Activated T-helper 1 cell treated with anti-CD3 and anti-CD28 coated beads, Interleukin-12 subunit alpha, Interleukin-12 subunit beta, Interleukin-2, Interleukin-4 antibody, amounts not matched to agents 30 ng/mL and 10 ng/mL and 1 ng/mL, durations not matched to agents 14 hours and 24 hours and 36 hours (primary cell): ENCODE measurements at regions of chr16 and their contacts with region 1.

Region 1: GRCh38 chr16:14300705-14301168 is 229.6 kb downstream of the MRTFB start:
- DNase-seq: no peak
- H3K4me3 Mint-ChIP-seq: peak overlapping the region; percentile 71
- H3K27ac Mint-ChIP-seq: peak overlapping the region; percentile 49
- H3K4me1 Mint-ChIP-seq: peaks cover 10% of the 10 kb centered on the region
- H3K27me3 Mint-ChIP-seq: peaks cover 38% of the 10 kb centered on the region

Region 2: DNA sequence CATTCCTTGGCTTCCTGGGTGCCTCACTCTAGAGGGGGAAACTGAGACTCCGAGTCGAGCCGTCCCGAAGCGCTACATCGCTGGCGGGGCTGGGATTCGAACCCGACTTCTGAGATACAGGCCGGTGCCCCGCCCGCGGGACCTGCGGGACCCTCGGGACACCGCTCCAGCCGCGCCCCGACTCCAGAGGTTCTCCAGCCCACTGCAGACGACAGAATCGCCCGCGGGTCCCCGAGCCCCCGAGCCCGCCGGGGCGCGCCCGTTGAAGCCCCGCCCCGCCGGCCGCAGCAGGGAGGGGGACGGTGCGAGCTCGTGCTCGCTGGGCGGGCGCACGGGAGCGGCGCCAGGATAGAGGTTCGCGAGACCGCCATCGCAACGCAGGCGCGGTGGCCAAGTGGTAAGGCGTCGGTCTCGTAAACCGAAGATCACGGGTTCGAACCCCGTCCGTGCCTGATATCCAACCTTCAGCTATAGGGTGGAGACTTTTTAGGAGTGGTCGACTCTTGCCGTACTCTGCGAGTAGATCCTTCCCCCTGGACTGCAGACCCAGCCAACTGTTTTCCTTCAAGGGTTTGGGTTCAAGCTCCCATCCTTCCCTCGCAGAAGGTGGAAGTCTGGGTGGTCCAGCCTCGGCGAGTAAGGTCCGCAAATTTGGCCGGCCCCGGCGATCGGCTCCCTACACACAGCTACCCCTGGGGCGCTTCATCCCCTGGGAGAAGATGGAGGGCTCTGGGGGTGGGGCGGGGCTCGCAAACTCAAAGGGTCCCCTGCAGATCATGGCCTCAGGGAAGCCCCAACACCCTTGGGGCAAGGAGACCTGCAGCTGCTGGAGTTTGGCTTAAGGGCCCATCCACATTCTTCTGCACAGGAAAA is 15.0 kb before region 1 on chr16:
- intact Hi-C with region 1: loop called (anchors 1 kb)
- DNase-seq: peak; percentile 91
- H3K4me3 Mint-ChIP-seq: peak overlapping the region; percentile 89
- H3K27ac Mint-ChIP-seq: peak overlapping the region; percentile 77
- H3K4me1 Mint-ChIP-seq: peaks cover 20% of the 10 kb centered on the region
- H3K27me3 Mint-ChIP-seq: peaks cover 6% of the 10 kb centered on the region

Region 3: GRCh38 chr16:14354551-14355351 is 54.0 kb after region 1 on chr16:
- intact Hi-C with region 1: loop called (anchors 1 kb)
- DNase-seq: peak; percentile 24
- H3K4me3 Mint-ChIP-seq: peak overlapping the region; percentile 8
- H3K27ac Mint-ChIP-seq: no peak overlapping the region
- H3K4me1 Mint-ChIP-seq: peaks cover 10% of the 10 kb centered on the region
- H3K27me3 Mint-ChIP-seq: peaks cover 21% of the 10 kb centered on the region

Region 4: GRCh38 chr16:14529010-14529669 is 228.4 kb after region 1 on chr16:
- intact Hi-C with region 1: loop called (anchors 2 kb)
- DNase-seq: peak; percentile 24
- H3K4me3 Mint-ChIP-seq: no peak overlapping the region
- H3K27ac Mint-ChIP-seq: no peak overlapping the region
- H3K4me1 Mint-ChIP-seq: peaks cover 5% of the 10 kb centered on the region
- H3K27me3 Mint-ChIP-seq: no peaks in the 10 kb centered on the region

Region 5: GRCh38 chr16:14600164-14600563 is 299.4 kb after region 1 on chr16:
- intact Hi-C with region 1: loop called (anchors 1 kb)
- DNase-seq: no peak
- H3K4me3 Mint-ChIP-seq: no peak overlapping the region
- H3K27ac Mint-ChIP-seq: no peak overlapping the region
- H3K4me1 Mint-ChIP-seq: peaks cover 6% of the 10 kb centered on the region
- H3K27me3 Mint-ChIP-seq: no peaks in the 10 kb centered on the region

Region 6: DNA sequence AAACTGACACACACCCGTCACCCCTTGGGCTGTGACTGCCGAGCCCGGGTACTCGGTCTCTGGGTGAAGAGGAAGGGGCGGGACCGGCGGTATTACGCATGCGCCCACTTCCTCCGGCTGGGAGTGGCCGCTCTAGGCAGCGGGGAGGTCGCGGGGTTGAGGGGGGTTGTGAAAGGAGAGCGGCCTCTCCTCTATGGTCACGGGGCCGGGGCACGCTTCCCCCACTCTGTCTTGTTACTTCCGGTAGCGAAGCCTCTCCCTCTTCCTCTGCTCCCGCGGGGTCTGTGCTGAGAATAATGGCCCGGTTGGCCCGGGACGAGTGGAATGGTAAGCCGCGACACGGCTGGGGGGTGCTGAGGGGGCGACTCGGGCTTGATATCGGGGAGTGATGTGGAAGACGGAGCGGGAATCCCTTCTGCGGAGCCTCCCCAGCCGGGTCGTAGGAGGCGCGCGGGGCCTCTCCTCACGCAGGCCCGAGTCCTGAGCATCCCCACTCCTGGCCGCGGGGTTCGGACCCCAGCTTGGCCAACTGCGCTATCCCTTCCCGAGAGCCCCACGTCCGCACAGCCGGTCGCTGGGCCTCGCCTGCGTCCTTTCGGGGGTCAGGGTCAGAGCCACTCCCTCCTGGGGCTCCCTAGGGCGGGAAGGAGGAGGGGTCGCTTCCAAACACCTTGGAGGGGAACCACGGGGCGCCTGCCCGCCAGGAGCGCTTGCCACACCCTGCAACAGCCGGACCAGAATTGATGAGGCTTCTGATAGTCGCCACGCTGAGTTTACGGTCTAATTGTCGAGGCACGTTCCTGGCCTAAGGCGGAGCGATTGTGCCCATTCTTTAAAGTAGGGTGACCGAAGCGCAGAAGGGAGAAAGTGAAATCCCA is 332.2 kb after region 1 on chr16 and contains the start of gene BFAR:
- intact Hi-C with region 1: loop called (anchors 2 kb)
- DNase-seq: peak; percentile 99
- H3K4me3 Mint-ChIP-seq: peak within 1 kb of the TSS; percentile 100
- H3K27ac Mint-ChIP-seq: peak within 1 kb of the TSS; percentile 100
- H3K4me1 Mint-ChIP-seq: peaks cover 60% of the 10 kb centered on the region
- H3K27me3 Mint-ChIP-seq: no peaks in the 10 kb centered on the region
- total RNA-seq, gene BFAR: 59.8 and 64.8 TPM in 2 replicates